Pancreas (tissue), 10 donors: ENCODE measurements at regions of chr19 and their contacts with region 1.

Region 1: GRCh38 chr19:18349524-18350128 is 9.2 kb downstream of the PGPEP1 start:
- DNase-seq: peak in 5 of 6 donors; percentile 51 to 84 (median 73)
- ATAC-seq: peak; percentile 77 to 93 (median 91)
- H3K4me3 ChIP-seq: no peak overlapping the region
- H3K27ac ChIP-seq: no peak overlapping the region
- H3K4me1 ChIP-seq: no peaks in the 10 kb centered on the region
- H3K27me3 ChIP-seq: no peaks in the 10 kb centered on the region
- CTCF ChIP-seq: peak; percentile 49 to 84 (median 66)

Region 2: DNA sequence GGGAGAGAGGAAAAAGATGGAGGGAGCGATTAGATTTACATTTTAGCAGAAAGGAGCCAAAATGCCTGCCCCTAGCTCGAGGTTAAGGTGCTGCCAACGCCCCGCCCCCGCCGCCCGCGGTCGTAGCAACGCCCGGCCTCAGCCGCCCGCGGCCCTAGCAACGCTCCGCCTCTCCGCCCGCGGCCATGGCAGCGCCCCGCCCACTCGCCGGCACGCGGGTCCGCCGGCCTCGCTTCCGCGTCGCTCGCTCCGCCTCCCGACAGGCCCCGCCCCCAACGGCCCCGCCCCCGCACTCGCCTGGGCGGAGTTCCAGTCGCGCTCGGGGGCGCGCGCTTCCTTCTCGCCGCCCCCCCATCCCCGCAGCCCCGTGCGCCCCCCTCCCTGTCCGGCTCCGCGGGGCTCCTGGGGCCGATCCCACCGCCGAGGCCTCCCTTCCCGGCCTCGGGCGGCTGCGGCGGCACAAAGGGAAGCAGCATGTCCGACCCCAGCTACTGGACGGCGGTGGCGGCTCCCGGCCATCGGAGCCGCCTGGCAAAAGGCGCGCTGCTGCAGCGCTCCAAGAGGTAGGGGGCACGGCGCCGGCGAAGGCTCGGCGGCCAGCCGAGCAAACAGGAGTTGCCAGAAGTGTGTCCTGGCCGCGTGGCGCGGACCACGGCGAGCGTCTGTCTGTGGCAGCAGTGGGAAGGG is 231.8 kb before region 1 on chr19:
- intact Hi-C with region 1: no loop called
- DNase-seq: peak; percentile 88 to 98 (median 95)
- ATAC-seq: peak; percentile 84 to 94 (median 92)
- H3K4me3 ChIP-seq: peak overlapping the region; percentile 27 to 61 (median 42)
- H3K27ac ChIP-seq: peak overlapping the region; percentile 22 to 52 (median 43)
- H3K4me1 ChIP-seq: peaks cover 8 to 21% (median 15%) of the 10 kb centered on the region in 3 donors
- H3K27me3 ChIP-seq: no peaks in the 10 kb centered on the region
- CTCF ChIP-seq: no peak

Region 3: DNA sequence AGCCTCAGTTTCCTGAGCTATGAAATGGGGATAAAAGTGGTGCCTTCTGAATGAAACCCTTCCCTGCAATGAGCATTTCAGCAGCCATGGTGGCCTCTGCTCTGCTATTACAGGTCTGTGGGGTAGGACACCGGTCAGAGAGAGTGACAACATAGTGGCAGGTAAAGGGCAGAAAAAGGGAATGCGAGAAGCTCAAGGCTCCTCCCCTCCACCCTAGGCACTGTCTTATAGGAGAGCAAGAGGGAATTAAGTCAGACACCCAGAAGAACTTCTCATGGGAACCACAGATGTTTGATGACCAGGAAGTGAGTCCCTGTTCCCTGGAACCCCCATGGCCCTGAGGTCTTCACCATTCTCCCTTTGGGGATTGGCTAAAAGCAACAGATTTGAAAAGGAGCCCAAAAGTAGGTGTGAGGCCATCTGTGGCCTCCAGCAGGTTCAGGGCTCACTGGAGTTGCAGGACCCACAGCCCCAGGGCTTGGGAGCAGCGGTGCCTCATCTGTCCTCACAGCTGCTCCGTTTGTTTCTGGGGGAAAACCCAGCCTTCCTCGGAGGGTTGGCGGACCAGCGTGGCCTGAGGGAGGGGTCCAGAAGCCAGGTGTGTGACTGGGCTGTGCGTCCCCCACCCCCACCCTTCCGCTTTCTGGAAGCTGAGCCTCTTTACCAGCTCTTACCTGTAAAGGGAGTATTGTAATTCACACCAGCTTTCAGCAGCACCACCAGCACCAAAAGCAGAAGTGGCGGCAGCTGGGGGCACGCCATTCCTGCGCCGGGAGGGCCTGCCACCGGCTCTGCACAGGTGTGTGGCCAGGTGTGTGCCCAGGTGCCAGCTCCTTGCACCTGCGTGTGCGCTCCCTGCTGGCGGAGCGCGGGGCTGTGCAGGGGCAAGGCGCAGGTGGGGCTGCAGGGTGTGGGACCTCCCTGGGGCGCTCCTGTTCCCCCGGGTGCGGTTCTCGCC is 94.8 kb before region 1 on chr19:
- intact Hi-C with region 1: no loop called
- DNase-seq: peak in 5 of 6 donors; percentile 40 to 79 (median 63)
- ATAC-seq: peak; percentile 78 to 92 (median 82)
- H3K4me3 ChIP-seq: peak overlapping the region in 2 of 4 donors; percentile 13 to 38
- H3K27ac ChIP-seq: no peak overlapping the region
- H3K4me1 ChIP-seq: no peaks in the 10 kb centered on the region
- H3K27me3 ChIP-seq: no peaks in the 10 kb centered on the region
- CTCF ChIP-seq: peak in 3 of 4 donors; percentile 16 to 27 (median 25)

Region 4: GRCh38 chr19:18392417-18392816 is 42.8 kb after region 1 on chr19:
- intact Hi-C with region 1: loop called in 1 of 3 experiments (anchors 5 kb)
- DNase-seq: no peak
- ATAC-seq: peak in 2 of 4 donors; percentile 4 to 43
- H3K4me3 ChIP-seq: no peak overlapping the region
- H3K27ac ChIP-seq: peak overlapping the region in 2 of 4 donors; percentile 3
- H3K4me1 ChIP-seq: no peaks in the 10 kb centered on the region
- H3K27me3 ChIP-seq: no peaks in the 10 kb centered on the region
- CTCF ChIP-seq: no peak

Region 5: GRCh38 chr19:18414504-18415177 is 65.0 kb after region 1 on chr19:
- intact Hi-C with region 1: loop called (anchors 5 kb)
- DNase-seq: peak in 2 of 6 donors; percentile 20 to 25
- ATAC-seq: no peak
- H3K4me3 ChIP-seq: peak overlapping the region in 1 of 4 donors; percentile 14
- H3K27ac ChIP-seq: peak overlapping the region in 1 of 4 donors; percentile 83
- H3K4me1 ChIP-seq: peaks cover 9 to 26% (median 12%) of the 10 kb centered on the region in 3 donors
- H3K27me3 ChIP-seq: no peaks in the 10 kb centered on the region
- CTCF ChIP-seq: no peak